BJ (cell line): ENCODE measurements at regions of chr17 and their contacts with region 1.

Region 1: GRCh38 chr17:59627274-59627673 is 7.6 kb downstream of the CLTC start:
- DNase-seq: no peak
- H3K4me3 ChIP-seq: no peak overlapping the region
- H3K27me3 ChIP-seq: no peaks in the 10 kb centered on the region
- CTCF ChIP-seq: no peak

Region 2: GRCh38 chr17:59561042-59561441 is 66.2 kb before region 1 on chr17:
- CTCF ChIA-PET with region 1: no interaction called
- POLR2A ChIA-PET with region 1: no interaction called
- DNase-seq: no peak
- H3K4me3 ChIP-seq: no peak overlapping the region
- H3K27me3 ChIP-seq: peaks cover 1% of the 10 kb centered on the region; the same call in 1 of the 2 replicates
- CTCF ChIP-seq: peak; percentile 39

Region 3: GRCh38 chr17:59641799-59642489 is 14.7 kb after region 1 on chr17:
- CTCF ChIA-PET with region 1: no interaction called
- POLR2A ChIA-PET with region 1: interaction called, 11 read pairs
- DNase-seq: no peak
- H3K4me3 ChIP-seq: no peak overlapping the region
- H3K27me3 ChIP-seq: no peaks in the 10 kb centered on the region
- CTCF ChIP-seq: no peak

Region 4: DNA sequence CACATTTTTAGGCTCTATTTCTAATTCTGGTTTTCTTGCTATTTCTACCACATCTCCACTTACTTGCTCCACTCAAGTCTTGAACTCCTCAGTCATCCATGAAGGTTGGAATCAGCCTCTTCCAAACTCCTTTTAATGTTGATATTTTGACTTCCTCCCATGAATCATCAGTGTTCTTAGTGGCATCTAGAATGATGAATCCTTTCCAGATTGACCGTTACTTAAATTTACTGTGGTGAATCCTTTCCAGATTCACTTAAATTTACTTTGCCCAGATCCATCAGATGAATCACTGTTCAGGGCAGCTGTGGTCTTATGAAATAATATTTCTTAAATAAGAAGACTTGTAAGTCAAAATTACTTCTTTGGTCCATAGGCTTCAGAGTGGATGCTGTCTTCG is 24.8 kb after region 1 on chr17:
- CTCF ChIA-PET with region 1: no interaction called
- POLR2A ChIA-PET with region 1: no interaction called
- DNase-seq: peak; percentile 38
- H3K4me3 ChIP-seq: no peak overlapping the region
- H3K27me3 ChIP-seq: no peaks in the 10 kb centered on the region
- CTCF ChIP-seq: no peak